H1 (cell line): ENCODE measurements at regions of chr2 and their contacts with region 1.

Region 1: DNA sequence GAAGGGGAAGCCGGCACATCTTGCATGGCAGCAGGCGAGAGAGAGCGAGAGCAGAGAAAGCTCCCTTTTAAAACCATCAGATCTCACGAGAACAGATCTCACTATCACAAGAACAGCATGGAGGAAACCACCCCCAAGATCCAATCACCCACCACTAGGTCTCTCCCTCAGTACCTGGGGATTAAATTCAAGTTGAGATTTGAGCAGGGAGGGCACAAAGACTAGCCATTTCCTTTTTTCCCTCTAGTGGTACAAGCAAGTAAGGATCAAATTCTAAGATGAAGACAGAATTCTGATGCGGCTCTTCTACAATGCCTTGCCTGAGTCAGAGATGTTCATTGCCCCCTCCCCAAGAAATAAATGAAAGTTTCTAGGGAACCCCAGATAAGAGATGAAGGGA is 45.6 kb upstream of the ANKRD44 start:
- DNase-seq: no peak
- H3K4me3 ChIP-seq: no peak overlapping the region
- H3K27ac ChIP-seq: no peak overlapping the region
- H3K4me1 ChIP-seq: no peaks in the 10 kb centered on the region
- H3K27me3 ChIP-seq: no peaks in the 10 kb centered on the region
- CTCF ChIP-seq: peak in 2 of 3 experiments; percentile 42 to 54; a peak in 2 of 4 replicates
- EP300 ChIP-seq: no peak
- POLR2A ChIP-seq: no peak
- RAD21 ChIP-seq: peak; percentile 32 to 53; a peak in 2 of 4 replicates

Region 2: GRCh38 chr2:197191177-197191939 is 164.8 kb before region 1 on chr2:
- CTCF ChIA-PET with region 1: interaction called, 11 read pairs
- POLR2A ChIA-PET with region 1: no interaction called
- DNase-seq: no peak
- H3K4me3 ChIP-seq: no peak overlapping the region
- H3K27ac ChIP-seq: no peak overlapping the region
- H3K4me1 ChIP-seq: peaks cover 0 to 6% (median 2%) of the 10 kb centered on the region in 4 experiments; a peak in 1 of 7 replicates
- H3K27me3 ChIP-seq: no peaks in the 10 kb centered on the region
- CTCF ChIP-seq: peak in 2 of 3 experiments; percentile 36 to 45; a peak in 2 of 4 replicates
- EP300 ChIP-seq: no peak
- POLR2A ChIP-seq: no peak
- RAD21 ChIP-seq: peak; percentile 59 to 68

Region 3: DNA sequence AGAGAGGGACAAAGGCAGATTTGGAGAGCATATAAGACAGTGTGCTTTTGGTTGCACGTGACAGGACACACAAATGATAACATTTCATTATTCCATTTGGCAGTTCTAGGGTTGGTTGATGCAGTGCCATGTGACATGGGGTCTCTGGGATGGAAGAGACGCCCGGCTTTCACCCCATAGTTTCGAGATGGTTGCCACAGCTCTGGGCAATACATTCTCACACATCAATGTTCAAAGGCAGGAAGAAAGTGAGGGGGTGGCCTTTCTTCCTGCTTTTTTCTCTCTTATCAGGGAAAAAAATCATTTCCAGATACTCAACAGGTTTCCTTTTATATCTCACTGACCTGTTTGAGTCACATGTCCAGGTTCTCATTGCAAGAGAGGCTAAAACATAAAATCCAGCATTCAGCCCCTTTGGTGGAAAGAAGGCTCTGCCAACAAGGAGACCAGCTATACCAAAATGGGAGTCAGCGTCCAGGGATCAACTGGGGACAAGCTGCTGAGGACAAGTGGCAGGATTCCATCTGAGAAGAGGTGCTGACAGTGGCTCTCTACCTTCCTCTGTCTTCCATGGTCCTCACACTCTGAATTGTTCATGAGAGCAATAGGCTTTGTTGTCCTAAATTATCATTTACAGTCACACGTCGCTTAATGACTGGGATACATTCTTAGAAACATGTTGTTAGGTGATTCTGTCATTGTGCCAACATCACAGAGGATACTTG is 16.5 kb before region 1 on chr2:
- CTCF ChIA-PET with region 1: interaction called, 12 read pairs
- POLR2A ChIA-PET with region 1: no interaction called
- DNase-seq: no peak
- H3K4me3 ChIP-seq: no peak overlapping the region
- H3K27ac ChIP-seq: no peak overlapping the region
- H3K4me1 ChIP-seq: no peaks in the 10 kb centered on the region
- H3K27me3 ChIP-seq: no peaks in the 10 kb centered on the region
- CTCF ChIP-seq: no peak
- EP300 ChIP-seq: no peak
- POLR2A ChIP-seq: no peak
- RAD21 ChIP-seq: no peak

Region 4: GRCh38 chr2:197345846-197346370 is 10.2 kb before region 1 on chr2:
- CTCF ChIA-PET with region 1: interaction called, 11 read pairs
- POLR2A ChIA-PET with region 1: no interaction called
- DNase-seq: no peak
- H3K4me3 ChIP-seq: no peak overlapping the region
- H3K27ac ChIP-seq: no peak overlapping the region
- H3K4me1 ChIP-seq: no peaks in the 10 kb centered on the region
- H3K27me3 ChIP-seq: no peaks in the 10 kb centered on the region; a peak in 1 of 7 replicates
- CTCF ChIP-seq: no peak
- EP300 ChIP-seq: no peak
- POLR2A ChIP-seq: no peak
- RAD21 ChIP-seq: no peak

Region 5: GRCh38 chr2:197369228-197369932 is 13.2 kb after region 1 on chr2:
- CTCF ChIA-PET with region 1: interaction called, 19 read pairs
- POLR2A ChIA-PET with region 1: no interaction called
- DNase-seq: no peak
- H3K4me3 ChIP-seq: no peak overlapping the region
- H3K27ac ChIP-seq: no peak overlapping the region
- H3K4me1 ChIP-seq: no peaks in the 10 kb centered on the region
- H3K27me3 ChIP-seq: no peaks in the 10 kb centered on the region
- CTCF ChIP-seq: no peak
- EP300 ChIP-seq: no peak
- POLR2A ChIP-seq: no peak
- RAD21 ChIP-seq: no peak

Region 6: GRCh38 chr2:197378494-197379307 is 22.6 kb after region 1 on chr2:
- CTCF ChIA-PET with region 1: interaction called, 19 read pairs
- POLR2A ChIA-PET with region 1: no interaction called
- DNase-seq: peak in 1 of 2 experiments; percentile 70
- H3K4me3 ChIP-seq: no peak overlapping the region
- H3K27ac ChIP-seq: no peak overlapping the region
- H3K4me1 ChIP-seq: no peaks in the 10 kb centered on the region
- H3K27me3 ChIP-seq: no peaks in the 10 kb centered on the region
- CTCF ChIP-seq: peak; percentile 36 to 86 (median 75)
- EP300 ChIP-seq: no peak
- POLR2A ChIP-seq: no peak
- RAD21 ChIP-seq: peak; percentile 97

Region 7: DNA sequence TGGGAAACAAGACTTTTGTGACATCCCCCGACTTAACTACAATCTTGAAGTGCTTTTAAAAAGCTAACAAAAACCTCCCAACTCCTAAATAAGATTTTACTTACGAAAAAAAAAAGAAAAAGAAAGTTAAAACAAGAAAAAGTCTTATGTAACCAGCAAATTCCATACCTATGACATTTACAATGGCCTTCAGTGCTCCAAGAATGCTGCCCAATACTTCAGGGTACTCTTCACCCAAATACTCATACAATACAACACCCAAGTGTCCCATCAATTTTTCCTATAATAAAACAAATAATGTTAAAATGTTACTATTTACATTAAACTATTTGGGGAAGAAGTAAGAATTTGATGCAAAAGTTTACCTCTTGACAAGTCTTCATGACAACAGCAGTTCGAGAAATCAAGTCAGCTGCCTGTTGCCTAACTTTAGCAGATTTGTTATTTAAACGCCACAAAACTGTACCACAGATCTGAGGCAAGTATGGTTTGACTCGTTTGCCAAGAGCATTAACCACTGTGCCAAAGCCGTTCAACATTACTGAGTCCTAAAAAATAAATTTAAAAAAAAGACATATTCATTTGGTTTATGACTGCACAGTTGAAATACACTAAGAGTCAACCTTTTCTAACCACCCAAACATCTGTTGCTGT is 43.9 kb after region 1 on chr2:
- CTCF ChIA-PET with region 1: no interaction called
- POLR2A ChIA-PET with region 1: no interaction called
- DNase-seq: no peak
- H3K4me3 ChIP-seq: no peak overlapping the region
- H3K27ac ChIP-seq: no peak overlapping the region
- H3K4me1 ChIP-seq: no peaks in the 10 kb centered on the region
- H3K27me3 ChIP-seq: no peaks in the 10 kb centered on the region
- CTCF ChIP-seq: no peak
- EP300 ChIP-seq: no peak
- POLR2A ChIP-seq: no peak
- RAD21 ChIP-seq: no peak